Naive thymus-derived CD4-positive, alpha-beta T cell (primary cell): ENCODE measurements at regions of chr18 and their contacts with region 1.

Region 1: GRCh38 chr18:32366586-32367538 is 103.8 kb downstream of the GAREM1 start:
- DNase-seq: no peak
- ATAC-seq: no peak
- H3K4me3 ChIP-seq: no peak overlapping the region
- H3K4me3 Mint-ChIP-seq: no peak overlapping the region
- H3K27ac ChIP-seq: no peak overlapping the region
- H3K27ac Mint-ChIP-seq: no peak overlapping the region
- H3K4me1 ChIP-seq: no peaks in the 10 kb centered on the region
- H3K4me1 Mint-ChIP-seq: peaks cover 0 to 2% (median 0%) of the 10 kb centered on the region in 7 donors
- H3K27me3 ChIP-seq: no peaks in the 10 kb centered on the region
- H3K27me3 Mint-ChIP-seq: peaks cover 3 to 38% (median 21%) of the 10 kb centered on the region in 5 donors

Region 2: GRCh38 chr18:32333781-32334180 is 33.1 kb before region 1 on chr18:
- CTCF ChIA-PET with region 1: no interaction called
- POLR2A ChIA-PET with region 1: no interaction called
- intact Hi-C with region 1: no loop called
- DNase-seq: no peak
- ATAC-seq: no peak
- H3K4me3 ChIP-seq: no peak overlapping the region
- H3K4me3 Mint-ChIP-seq: no peak overlapping the region
- H3K27ac ChIP-seq: no peak overlapping the region
- H3K27ac Mint-ChIP-seq: no peak overlapping the region
- H3K4me1 ChIP-seq: no peaks in the 10 kb centered on the region
- H3K4me1 Mint-ChIP-seq: no peaks in the 10 kb centered on the region
- H3K27me3 ChIP-seq: no peaks in the 10 kb centered on the region
- H3K27me3 Mint-ChIP-seq: peaks cover 0 to 11% (median 5%) of the 10 kb centered on the region in 5 donors

Region 3: GRCh38 chr18:32353257-32353656 is 13.6 kb before region 1 on chr18:
- CTCF ChIA-PET with region 1: no interaction called
- POLR2A ChIA-PET with region 1: no interaction called
- intact Hi-C with region 1: loop called in 1 of 2 experiments (anchors 1 kb)
- DNase-seq: no peak
- ATAC-seq: no peak
- H3K4me3 ChIP-seq: no peak overlapping the region
- H3K4me3 Mint-ChIP-seq: no peak overlapping the region
- H3K27ac ChIP-seq: no peak overlapping the region
- H3K27ac Mint-ChIP-seq: no peak overlapping the region
- H3K4me1 ChIP-seq: no peaks in the 10 kb centered on the region
- H3K4me1 Mint-ChIP-seq: no peaks in the 10 kb centered on the region
- H3K27me3 ChIP-seq: no peaks in the 10 kb centered on the region
- H3K27me3 Mint-ChIP-seq: peaks cover 0 to 17% (median 6%) of the 10 kb centered on the region in 5 donors

Region 4: GRCh38 chr18:32405588-32405987 is 38.7 kb after region 1 on chr18:
- CTCF ChIA-PET with region 1: no interaction called
- POLR2A ChIA-PET with region 1: no interaction called
- intact Hi-C with region 1: no loop called
- DNase-seq: no peak
- ATAC-seq: no peak
- H3K4me3 ChIP-seq: no peak overlapping the region
- H3K4me3 Mint-ChIP-seq: no peak overlapping the region
- H3K27ac ChIP-seq: no peak overlapping the region
- H3K27ac Mint-ChIP-seq: no peak overlapping the region
- H3K4me1 ChIP-seq: no peaks in the 10 kb centered on the region
- H3K4me1 Mint-ChIP-seq: peaks cover 0 to 8% (median 5%) of the 10 kb centered on the region in 7 donors
- H3K27me3 ChIP-seq: no peaks in the 10 kb centered on the region
- H3K27me3 Mint-ChIP-seq: peaks cover 0 to 10% (median 5%) of the 10 kb centered on the region in 5 donors